Ovary (tissue), 10 donors: ENCODE measurements at regions of chr1 and their contacts with region 1.

Region 1: DNA sequence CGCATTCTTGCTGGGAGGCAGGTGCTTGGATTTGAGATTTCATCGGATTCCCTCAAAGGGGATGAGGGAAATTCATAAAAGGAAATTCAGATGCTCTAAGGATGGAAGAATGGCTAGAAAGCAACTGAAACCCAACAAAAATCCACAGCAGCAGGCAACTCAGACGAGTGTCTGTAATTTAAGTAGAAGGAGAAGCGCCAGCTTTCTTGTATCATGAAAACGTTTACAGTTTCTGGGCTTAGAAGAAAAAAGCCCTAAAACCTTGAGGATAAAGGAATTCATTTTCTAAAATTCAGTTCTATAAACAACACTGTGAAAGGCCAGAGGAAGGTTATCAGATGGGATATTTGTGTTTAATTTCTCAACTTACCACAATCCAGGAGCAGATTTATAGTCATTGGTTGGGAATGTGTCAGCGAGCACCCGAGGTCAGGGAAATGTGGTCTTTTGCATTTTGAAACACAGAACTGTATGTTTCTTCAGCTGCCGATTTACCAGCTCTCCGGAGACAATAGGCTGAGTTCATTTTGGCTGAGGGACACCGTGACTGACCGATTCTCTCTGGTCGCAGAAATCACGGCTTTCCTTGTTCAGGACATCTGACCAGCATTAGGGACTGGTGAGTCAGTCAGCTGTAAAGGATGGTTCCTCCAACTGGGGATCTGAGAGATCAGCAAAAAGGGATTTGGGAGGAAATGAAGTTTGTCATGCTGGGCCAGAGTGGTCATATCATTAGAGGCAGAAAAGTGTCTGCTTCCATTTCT is 111.6 kb upstream of the ERRFI1 start:
- DNase-seq: peak in 2 of 5 donors; percentile 53 to 56
- H3K4me3 ChIP-seq: no peak overlapping the region
- H3K27ac ChIP-seq: peak overlapping the region; percentile 7 to 67
- H3K4me1 ChIP-seq: peaks cover 19% of the 10 kb centered on the region
- H3K27me3 ChIP-seq: no peaks in the 10 kb centered on the region
- CTCF ChIP-seq: no peak
- EP300 ChIP-seq: no peak
- POLR2A ChIP-seq: no peak

Region 2: DNA sequence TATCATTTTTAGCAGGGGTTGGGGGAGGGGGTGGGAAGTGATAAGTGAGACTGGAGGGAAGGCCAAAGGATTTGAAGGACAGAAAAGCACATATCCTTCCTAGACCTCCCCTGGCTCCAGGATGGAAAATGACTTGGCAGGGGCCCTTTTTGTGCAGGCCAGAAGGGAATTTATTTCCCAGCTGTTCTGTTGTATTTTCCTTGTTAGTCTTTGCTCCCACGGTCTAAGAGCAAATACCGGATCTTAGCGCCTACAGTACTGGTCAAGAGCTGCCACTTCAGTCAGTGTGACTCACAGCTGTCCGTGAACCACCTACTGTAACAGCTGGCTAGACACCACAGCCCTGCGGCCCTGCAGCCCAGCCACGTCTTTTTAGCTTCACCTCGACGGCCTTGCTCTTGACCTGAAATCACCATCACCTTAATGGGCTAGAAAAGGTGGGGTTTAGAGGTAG is 60.5 kb before region 1 on chr1:
- intact Hi-C with region 1: loop called in 1 of 4 experiments (anchors 10 kb)
- DNase-seq: peak; percentile 56 to 69 (median 60)
- H3K4me3 ChIP-seq: no peak overlapping the region
- H3K27ac ChIP-seq: no peak overlapping the region
- H3K4me1 ChIP-seq: peaks cover 12% of the 10 kb centered on the region
- H3K27me3 ChIP-seq: no peaks in the 10 kb centered on the region
- CTCF ChIP-seq: no peak
- EP300 ChIP-seq: no peak
- POLR2A ChIP-seq: no peak

Region 3: GRCh38 chr1:8217011-8217711 is 79.5 kb after region 1 on chr1:
- intact Hi-C with region 1: loop called in 1 of 4 experiments (anchors 5 kb)
- DNase-seq: peak; percentile 56 to 77 (median 62)
- H3K4me3 ChIP-seq: peak overlapping the region; percentile 35
- H3K27ac ChIP-seq: peak overlapping the region; percentile 58 to 77
- H3K4me1 ChIP-seq: peaks cover 6% of the 10 kb centered on the region
- H3K27me3 ChIP-seq: no peaks in the 10 kb centered on the region
- CTCF ChIP-seq: peak in 2 of 3 donors; percentile 9 to 16
- EP300 ChIP-seq: no peak
- POLR2A ChIP-seq: no peak